ENCODE measurements at regions of chr10 and their contacts with region 1.

Region 1: DNA sequence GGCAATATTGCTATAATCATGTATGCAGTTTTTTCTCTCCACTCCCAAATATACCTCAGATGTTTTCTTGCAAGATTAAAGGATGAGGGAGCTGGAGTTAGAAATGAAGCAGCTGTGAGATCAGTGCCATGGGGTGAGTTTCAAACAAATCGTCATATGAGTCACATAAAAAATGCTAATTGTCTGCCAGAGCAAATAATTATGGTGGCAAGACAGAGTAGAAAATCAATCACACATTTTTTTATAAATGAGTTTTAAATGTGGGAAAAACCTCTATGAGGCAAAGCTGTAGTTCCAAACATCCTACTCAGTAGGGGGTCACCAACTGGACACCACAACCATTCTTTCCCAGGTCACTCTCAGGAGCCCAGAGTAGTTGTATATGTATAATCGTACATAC is 55.3 kb downstream of the CH25H start:
- DNase-seq: peak; percentile 89
- ATAC-seq: peak; percentile 62
- H3K4me3 ChIP-seq: no peak overlapping the region
- H3K27ac ChIP-seq: peak overlapping the region; percentile 49; the same call in 1 of the 2 replicates
- H3K4me1 ChIP-seq: peaks cover 8% of the 10 kb centered on the region
- H3K27me3 ChIP-seq: no peaks in the 10 kb centered on the region
- CTCF ChIP-seq: no peak
- POLR2A ChIP-seq: no peak
- RAD21 ChIP-seq: no peak

Region 2: GRCh38 chr10:89167915-89168314 is 16.1 kb after region 1 on chr10:
- CTCF ChIA-PET with region 1: interaction called, 3 read pairs
- POLR2A ChIA-PET with region 1: no interaction called
- dilution Hi-C with region 1: no loop called
- in situ Hi-C with region 1: no loop called
- intact Hi-C with region 1: loop called (anchors 2 kb)
- DNase-seq: no peak
- ATAC-seq: no peak
- H3K4me3 ChIP-seq: no peak overlapping the region
- H3K27ac ChIP-seq: no peak overlapping the region
- H3K4me1 ChIP-seq: peaks cover 2% of the 10 kb centered on the region
- H3K27me3 ChIP-seq: peaks cover 8% of the 10 kb centered on the region; the same call in 1 of the 2 replicates
- CTCF ChIP-seq: no peak
- POLR2A ChIP-seq: no peak
- RAD21 ChIP-seq: no peak

Region 3: GRCh38 chr10:89201345-89202032 is 49.6 kb after region 1 on chr10:
- CTCF ChIA-PET with region 1: no interaction called
- POLR2A ChIA-PET with region 1: no interaction called
- dilution Hi-C with region 1: no loop called
- in situ Hi-C with region 1: no loop called
- intact Hi-C with region 1: loop called (anchors 5 kb)
- DNase-seq: peak; percentile 35
- ATAC-seq: peak; percentile 31
- H3K4me3 ChIP-seq: no peak overlapping the region
- H3K27ac ChIP-seq: peak overlapping the region; percentile 24; the same call in 1 of the 2 replicates
- H3K4me1 ChIP-seq: peaks cover 18% of the 10 kb centered on the region
- H3K27me3 ChIP-seq: peaks cover 4% of the 10 kb centered on the region; the same call in 1 of the 2 replicates
- CTCF ChIP-seq: no peak
- POLR2A ChIP-seq: no peak
- RAD21 ChIP-seq: no peak

Measured in IMR-90 (cell line).